Endothelial cell of umbilical vein (primary cell): ENCODE measurements at regions of chr3 and their contacts with region 1.

Region 1: DNA sequence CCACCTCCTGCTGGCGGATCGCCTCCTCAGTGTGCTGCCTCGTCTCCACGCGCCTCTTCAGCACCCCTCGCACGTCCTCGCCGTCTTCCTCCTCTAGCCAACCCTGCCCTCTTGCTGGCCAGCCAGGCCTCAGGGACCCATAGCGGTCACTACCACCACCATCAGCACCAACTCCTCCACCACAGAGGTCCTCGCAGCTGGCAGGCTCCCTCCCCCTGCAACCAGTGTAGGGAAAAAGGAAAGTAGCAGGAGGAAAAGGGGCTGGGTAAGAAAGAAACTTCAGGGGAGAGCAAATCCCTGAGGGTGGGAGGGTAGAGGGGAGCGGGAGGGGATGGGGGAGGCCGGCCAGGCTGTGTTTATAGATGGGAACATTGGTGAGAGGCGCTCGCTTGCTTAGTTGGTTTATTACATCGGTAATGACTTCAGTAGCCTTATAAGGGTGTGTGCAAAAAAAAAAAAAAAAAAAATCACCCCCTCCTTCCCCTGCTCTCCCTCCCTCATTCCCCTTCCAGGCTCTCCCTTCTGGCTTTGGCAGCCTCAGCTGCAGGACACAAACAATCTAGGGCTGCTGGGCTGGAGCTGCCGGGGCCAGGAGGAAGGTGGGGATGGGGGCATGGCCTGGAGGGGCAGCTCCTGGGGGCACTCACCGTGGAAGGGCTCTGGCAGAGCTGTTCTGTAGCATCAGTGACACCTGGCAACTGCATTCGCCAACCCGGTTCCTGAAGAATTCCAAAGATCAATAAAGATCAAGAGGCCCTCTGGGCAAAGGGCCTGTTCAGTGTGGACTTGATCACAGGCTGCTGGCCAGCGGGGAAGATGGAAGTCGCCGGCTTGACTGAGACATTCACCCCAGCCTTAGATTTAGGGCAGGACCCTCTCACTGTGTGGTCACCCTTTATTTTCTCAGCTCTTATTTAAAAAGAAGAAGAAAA is 116.2 kb upstream of the HACD2 start:
- DNase-seq: no peak
- H3K4me3 ChIP-seq: no peak overlapping the region
- H3K27ac ChIP-seq: no peak overlapping the region
- H3K4me1 ChIP-seq: peaks cover 3% of the 10 kb centered on the region
- H3K27me3 ChIP-seq: no peaks in the 10 kb centered on the region
- CTCF ChIP-seq: no peak
- POLR2A ChIP-seq: no peak

Region 2: DNA sequence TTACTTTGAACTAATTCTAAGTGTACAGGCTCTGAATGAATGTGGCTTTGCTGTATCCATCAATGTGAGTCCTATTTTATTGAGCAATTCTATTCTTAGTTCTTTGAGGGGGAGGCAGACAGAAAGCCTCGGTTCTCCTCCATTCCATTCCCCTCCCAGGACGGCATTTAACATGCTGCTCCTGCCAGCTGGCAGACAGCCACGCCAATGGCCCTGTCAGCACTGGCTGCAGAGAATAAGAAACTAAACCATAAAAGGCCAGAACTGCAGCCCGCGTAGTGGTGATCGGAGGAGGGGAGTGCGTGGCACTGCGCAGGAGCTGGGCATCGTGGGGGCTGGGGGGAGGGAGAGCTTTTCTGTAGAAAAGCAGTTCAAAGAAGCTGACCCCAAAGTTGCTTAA is 40.2 kb before region 1 on chr3:
- CTCF ChIA-PET with region 1: interaction called, 299 read pairs
- POLR2A ChIA-PET with region 1: no interaction called
- dilution Hi-C with region 1: no loop called
- intact Hi-C with region 1: no loop called
- DNase-seq: peak; percentile 89
- H3K4me3 ChIP-seq: no peak overlapping the region
- H3K27ac ChIP-seq: no peak overlapping the region
- H3K4me1 ChIP-seq: peaks cover 23% of the 10 kb centered on the region
- H3K27me3 ChIP-seq: no peaks in the 10 kb centered on the region
- CTCF ChIP-seq: no peak
- POLR2A ChIP-seq: no peak

Region 3: GRCh38 chr3:123750659-123751420 is 49.8 kb after region 1 on chr3:
- CTCF ChIA-PET with region 1: no interaction called
- POLR2A ChIA-PET with region 1: no interaction called
- dilution Hi-C with region 1: no loop called
- intact Hi-C with region 1: no loop called
- DNase-seq: peak; percentile 64
- H3K4me3 ChIP-seq: no peak overlapping the region
- H3K27ac ChIP-seq: peak overlapping the region; percentile 46
- H3K4me1 ChIP-seq: peaks cover 15% of the 10 kb centered on the region
- H3K27me3 ChIP-seq: no peaks in the 10 kb centered on the region
- CTCF ChIP-seq: no peak
- POLR2A ChIP-seq: no peak